Cardiac septum (tissue), 1 donor: ENCODE measurements at regions of chr1 and their contacts with region 1.

Region 1: GRCh38 chr1:61641578-61642336 is 83.2 kb downstream of the TM2D1 start:
- DNase-seq: peak; percentile 90

Region 2: DNA sequence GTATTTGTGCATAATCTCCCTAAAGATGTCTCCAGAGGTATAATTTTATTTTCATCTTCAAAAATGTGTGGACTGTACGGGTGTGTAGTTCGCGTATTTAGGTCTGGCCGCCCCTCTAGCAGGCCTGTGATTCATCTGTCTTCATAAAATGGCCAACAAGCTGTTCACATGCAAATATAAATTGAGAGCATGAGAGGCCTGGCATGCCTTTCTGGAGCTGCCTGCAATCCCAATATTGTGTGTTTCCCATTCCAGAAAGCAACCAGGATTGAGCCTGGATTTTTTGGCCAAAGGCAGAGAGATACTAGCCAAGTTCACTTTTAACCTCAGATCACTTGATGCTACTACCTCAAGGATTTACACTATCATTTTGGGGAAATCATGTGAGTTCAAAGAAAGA is 362.2 kb before region 1 on chr1:
- intact Hi-C with region 1: loop called (anchors 2 kb)
- DNase-seq: no peak